AG04450 (cell line): ENCODE measurements at regions of chr4 and their contacts with region 1.

Region 1: DNA sequence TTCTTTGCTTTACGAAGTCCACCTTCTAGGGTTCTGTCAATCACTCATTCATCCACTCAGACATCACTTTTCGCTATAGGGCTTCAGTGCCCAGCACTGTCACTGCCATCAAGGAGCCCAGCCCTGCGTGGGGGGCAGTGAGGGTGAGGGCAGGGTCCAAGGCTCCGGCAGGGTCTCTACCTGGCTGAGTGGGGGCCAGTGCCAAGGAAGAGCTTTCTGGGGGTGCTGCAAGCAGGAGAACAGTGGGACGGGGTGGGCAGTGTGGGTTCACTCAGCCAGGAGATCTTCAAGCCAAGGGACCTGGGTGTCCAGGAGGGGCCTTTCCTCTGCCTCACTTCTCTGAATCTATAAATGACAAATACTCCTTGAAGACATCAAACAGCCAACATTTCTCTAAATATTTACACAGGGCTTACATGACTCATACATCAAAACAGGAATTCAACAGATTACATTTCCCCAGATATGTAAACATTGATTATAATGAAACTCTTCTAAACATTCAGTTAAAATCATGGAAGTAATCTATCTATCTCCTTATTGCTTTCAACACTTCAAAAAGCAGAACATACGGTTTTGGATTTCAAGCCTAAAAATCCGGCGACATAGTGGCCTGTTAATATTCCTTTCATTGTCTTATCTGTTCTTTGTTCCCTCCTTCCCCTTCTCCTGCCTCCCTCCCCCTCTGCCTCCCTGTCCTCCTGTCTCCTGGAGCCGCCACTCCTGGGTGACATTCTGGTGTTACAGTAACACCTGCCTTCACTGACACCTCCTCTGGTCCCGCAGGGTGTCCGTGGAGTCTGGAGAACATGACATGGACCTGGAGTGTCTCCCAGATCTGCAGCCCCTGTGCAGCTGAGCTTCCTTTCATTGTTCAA is 94.4 kb upstream of the ADRA2C start:
- DNase-seq: no peak
- H3K4me3 ChIP-seq: no peak overlapping the region
- H3K27ac ChIP-seq: no peak overlapping the region
- H3K27me3 ChIP-seq: peaks cover 15% of the 10 kb centered on the region
- CTCF ChIP-seq: no peak

Region 2: GRCh38 chr4:3531879-3532713 is 139.7 kb before region 1 on chr4 and contains the start of gene LRPAP1:
- CTCF ChIA-PET with region 1: interaction called, 10 read pairs
- POLR2A ChIA-PET with region 1: no interaction called
- DNase-seq: peak; percentile 60
- H3K4me3 ChIP-seq: peak within 1 kb of the TSS; percentile 90
- H3K27ac ChIP-seq: no peak within 1 kb of the TSS
- H3K27me3 ChIP-seq: peaks cover 7% of the 10 kb centered on the region
- CTCF ChIP-seq: no peak
- polyA plus RNA-seq, gene LRPAP1: 150 and 191 TPM in 2 replicates